ENCODE measurements at regions of chr20 and their contacts with region 1.

Region 1: GRCh38 chr20:4063631-4064030 is 48.3 kb upstream of the RNF24 start:
- DNase-seq: no peak
- ATAC-seq: no peak
- H3K4me3 ChIP-seq: no peak overlapping the region
- H3K4me3 Mint-ChIP-seq: no peak overlapping the region
- H3K27ac ChIP-seq: no peak overlapping the region
- H3K27ac Mint-ChIP-seq: no peak overlapping the region
- H3K4me1 ChIP-seq: peaks cover 4% of the 10 kb centered on the region
- H3K4me1 Mint-ChIP-seq: peaks cover 26% of the 10 kb centered on the region
- H3K27me3 ChIP-seq: no peaks in the 10 kb centered on the region
- H3K27me3 Mint-ChIP-seq: no peaks in the 10 kb centered on the region
- CTCF ChIP-seq: no peak

Region 2: DNA sequence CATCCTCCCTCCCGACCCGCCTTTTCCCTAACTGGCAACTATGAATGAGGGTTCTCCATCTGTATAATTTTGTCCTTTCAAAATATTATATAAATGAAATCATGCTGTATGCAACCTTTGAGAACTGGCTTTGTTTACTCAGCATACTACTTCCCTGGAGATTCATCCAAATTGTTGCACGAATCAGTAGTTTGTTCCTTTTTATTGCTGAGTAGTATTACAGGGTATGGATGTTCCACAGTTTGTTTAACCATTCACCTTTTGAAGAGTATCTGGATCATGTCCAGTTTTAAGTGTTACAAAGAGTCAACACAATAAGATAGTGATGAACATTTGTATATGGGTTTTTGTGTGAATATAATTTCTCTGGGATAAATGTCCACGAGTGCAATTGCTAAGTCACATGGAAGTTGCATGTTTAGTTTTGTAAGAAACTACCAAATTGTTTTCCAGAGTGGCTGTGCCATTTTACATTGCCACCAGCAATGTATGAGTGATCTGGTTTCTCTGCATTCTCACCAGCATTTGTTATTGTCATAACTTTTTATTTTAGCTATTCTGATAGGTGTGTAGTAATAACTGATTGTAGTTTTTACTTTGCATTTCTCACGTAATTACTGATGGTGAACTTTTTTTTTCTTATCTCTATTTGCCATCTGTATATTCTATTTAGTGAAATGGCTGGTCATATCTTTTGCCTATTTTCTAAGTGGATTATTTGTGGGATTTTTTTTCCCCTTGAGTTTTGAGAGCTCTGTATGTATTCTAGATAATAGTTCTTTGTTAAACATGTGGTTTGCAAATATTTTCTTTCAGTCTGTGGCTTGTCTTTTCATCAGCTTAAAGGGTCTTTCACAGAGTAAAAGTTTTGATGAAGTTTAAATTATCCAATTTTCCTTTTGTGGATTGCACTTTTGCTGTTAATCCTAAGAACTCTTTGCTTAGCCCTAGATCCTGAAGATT is 33.8 kb before region 1 on chr20:
- CTCF ChIA-PET with region 1: no interaction called
- POLR2A ChIA-PET with region 1: no interaction called
- intact Hi-C with region 1: no loop called
- DNase-seq: no peak
- ATAC-seq: no peak
- H3K4me3 ChIP-seq: no peak overlapping the region
- H3K4me3 Mint-ChIP-seq: no peak overlapping the region
- H3K27ac ChIP-seq: no peak overlapping the region
- H3K27ac Mint-ChIP-seq: no peak overlapping the region
- H3K4me1 ChIP-seq: no peaks in the 10 kb centered on the region
- H3K4me1 Mint-ChIP-seq: no peaks in the 10 kb centered on the region
- H3K27me3 ChIP-seq: no peaks in the 10 kb centered on the region
- H3K27me3 Mint-ChIP-seq: no peaks in the 10 kb centered on the region
- CTCF ChIP-seq: no peak

Region 3: GRCh38 chr20:4045741-4046140 is 17.9 kb before region 1 on chr20:
- CTCF ChIA-PET with region 1: no interaction called
- POLR2A ChIA-PET with region 1: no interaction called
- intact Hi-C with region 1: loop called in 1 of 2 experiments (anchors 2 kb)
- DNase-seq: no peak
- ATAC-seq: no peak
- H3K4me3 ChIP-seq: no peak overlapping the region
- H3K4me3 Mint-ChIP-seq: no peak overlapping the region
- H3K27ac ChIP-seq: no peak overlapping the region
- H3K27ac Mint-ChIP-seq: no peak overlapping the region
- H3K4me1 ChIP-seq: no peaks in the 10 kb centered on the region
- H3K4me1 Mint-ChIP-seq: no peaks in the 10 kb centered on the region
- H3K27me3 ChIP-seq: no peaks in the 10 kb centered on the region
- H3K27me3 Mint-ChIP-seq: no peaks in the 10 kb centered on the region
- CTCF ChIP-seq: no peak

Region 4: GRCh38 chr20:4108495-4109306 is 45.1 kb after region 1 on chr20:
- CTCF ChIA-PET with region 1: no interaction called
- POLR2A ChIA-PET with region 1: no interaction called
- intact Hi-C with region 1: no loop called
- DNase-seq: peak; percentile 33 to 82 (median 46)
- ATAC-seq: peak; percentile 81
- H3K4me3 ChIP-seq: no peak overlapping the region
- H3K4me3 Mint-ChIP-seq: no peak overlapping the region
- H3K27ac ChIP-seq: no peak overlapping the region
- H3K27ac Mint-ChIP-seq: no peak overlapping the region
- H3K4me1 ChIP-seq: peaks cover 6% of the 10 kb centered on the region
- H3K4me1 Mint-ChIP-seq: peaks cover 6% of the 10 kb centered on the region
- H3K27me3 ChIP-seq: peaks cover 0 to 4% of the 10 kb centered on the region in 2 experiments
- H3K27me3 Mint-ChIP-seq: peaks cover 16% of the 10 kb centered on the region
- CTCF ChIP-seq: peak; percentile 90